Colonic mucosa (tissue), 4 donors: ENCODE measurements at regions of chr17 and their contacts with region 1.

Region 1: DNA sequence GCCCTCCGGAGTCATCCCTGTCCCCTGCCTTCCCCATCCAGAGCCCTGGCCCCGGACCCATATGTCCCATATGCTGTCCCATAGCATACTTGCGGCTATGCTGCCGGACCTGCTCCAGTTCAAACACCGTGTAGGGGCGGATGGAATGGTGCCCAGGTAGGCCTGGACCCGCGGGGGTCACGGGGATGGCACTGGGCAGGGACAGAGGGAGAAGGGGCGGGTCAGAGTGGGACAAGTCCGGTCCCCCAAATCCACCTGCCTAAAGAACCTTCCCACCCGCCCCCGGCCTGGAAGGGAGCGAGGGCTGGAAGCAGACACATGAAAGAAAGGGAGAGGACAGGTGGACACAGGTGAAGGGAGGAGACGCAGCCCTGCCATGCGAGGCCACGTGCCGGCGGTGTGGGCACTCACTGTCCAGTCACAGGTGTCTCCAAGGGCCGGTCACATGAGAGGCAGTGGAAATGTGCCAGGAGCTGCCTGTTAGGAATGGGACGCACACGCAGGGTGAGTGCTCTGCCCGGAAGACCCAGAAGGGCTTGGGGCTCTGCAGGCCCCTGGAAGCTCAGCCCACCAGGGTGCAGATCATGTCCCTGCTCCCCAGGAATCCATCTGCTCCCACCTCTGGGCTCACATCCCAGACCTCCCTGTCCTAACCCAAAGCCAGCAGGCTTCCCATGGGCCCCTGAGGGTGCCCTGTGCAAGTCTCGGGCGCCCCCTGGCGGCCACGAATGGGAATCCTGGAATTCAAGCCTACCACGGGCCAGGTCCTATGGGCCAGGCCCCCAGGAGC is 14.0 kb downstream of the UBALD2 start:
- DNase-seq: peak; percentile 92
- H3K4me3 ChIP-seq: no peak overlapping the region
- H3K27ac ChIP-seq: no peak overlapping the region
- H3K4me1 ChIP-seq: no peaks in the 10 kb centered on the region
- H3K27me3 ChIP-seq: no peaks in the 10 kb centered on the region
- CTCF ChIP-seq: peak; percentile 97

Region 2: GRCh38 chr17:76091526-76092285 is 187.4 kb before region 1 on chr17:
- intact Hi-C with region 1: no loop called
- DNase-seq: no peak
- H3K4me3 ChIP-seq: no peak overlapping the region
- H3K27ac ChIP-seq: no peak overlapping the region
- H3K4me1 ChIP-seq: no peaks in the 10 kb centered on the region
- H3K27me3 ChIP-seq: no peaks in the 10 kb centered on the region
- CTCF ChIP-seq: no peak

Region 3: GRCh38 chr17:76121932-76122430 is 157.2 kb before region 1 on chr17:
- intact Hi-C with region 1: loop called (anchors 2 kb)
- DNase-seq: peak; percentile 19
- H3K4me3 ChIP-seq: peak overlapping the region; percentile 35
- H3K27ac ChIP-seq: no peak overlapping the region
- H3K4me1 ChIP-seq: no peaks in the 10 kb centered on the region
- H3K27me3 ChIP-seq: no peaks in the 10 kb centered on the region
- CTCF ChIP-seq: no peak

Region 4: DNA sequence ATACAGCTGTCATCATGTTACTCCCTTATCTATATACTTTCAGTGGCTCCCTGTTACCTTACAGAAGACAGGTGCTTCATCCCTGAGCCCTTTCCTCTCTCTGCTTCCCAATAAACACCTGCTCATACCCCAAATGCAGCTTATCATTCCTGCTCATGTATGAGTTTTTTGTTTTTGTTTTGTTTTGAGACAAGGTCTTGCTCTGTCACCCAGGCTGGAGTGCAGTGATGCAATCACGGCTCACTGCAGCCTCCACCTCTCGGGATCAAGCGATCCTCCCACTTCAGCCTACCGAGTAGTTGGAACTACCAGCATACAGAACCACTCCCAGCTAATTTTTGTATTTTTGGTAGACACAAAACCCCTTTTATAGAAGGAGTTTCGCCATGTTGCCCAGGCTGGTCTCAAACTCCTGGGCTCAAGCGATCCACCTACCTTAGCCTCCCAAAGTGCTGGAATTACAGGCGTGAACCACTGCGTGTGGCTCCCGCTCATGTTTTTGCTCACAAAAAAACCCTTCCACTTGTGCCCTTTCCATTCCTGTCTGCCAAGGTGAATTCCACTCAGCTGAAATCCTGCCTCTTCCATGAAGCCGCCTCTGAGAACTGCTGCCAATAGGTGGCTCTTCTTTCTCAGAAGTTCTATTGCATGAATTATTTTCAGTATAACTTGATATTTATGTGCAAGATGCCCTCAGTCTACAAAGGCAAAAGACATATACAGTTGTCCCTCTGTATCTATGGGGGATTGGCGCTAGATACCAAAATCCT is 30.9 kb before region 1 on chr17:
- intact Hi-C with region 1: loop called (anchors 2 kb)
- DNase-seq: no peak
- H3K4me3 ChIP-seq: no peak overlapping the region
- H3K27ac ChIP-seq: no peak overlapping the region
- H3K4me1 ChIP-seq: no peaks in the 10 kb centered on the region
- H3K27me3 ChIP-seq: no peaks in the 10 kb centered on the region
- CTCF ChIP-seq: no peak